ENCODE measurements at regions of chr20 and their contacts with region 1.

Region 1: GRCh38 chr20:38290832-38291581 is 12.9 kb upstream of the BPI start:
- DNase-seq: peak; percentile 82 to 87
- ATAC-seq: peak; percentile 93 to 96
- H3K4me3 ChIP-seq: peak overlapping the region; percentile 45
- H3K27ac ChIP-seq: peak overlapping the region; percentile 52 to 71
- H3K4me1 ChIP-seq: no peaks in the 10 kb centered on the region
- CTCF ChIP-seq: peak; percentile 89
- EP300 ChIP-seq: 0 out of 5 replicates have a peak, but pooled peaks of 1 of the 2 experiments have one; percentile 12
- POLR2A ChIP-seq: no peak
- RAD21 ChIP-seq: peak; percentile 54 to 62

Region 2: GRCh38 chr20:38262931-38263330 is 28.1 kb before region 1 on chr20:
- CTCF ChIA-PET with region 1: interaction called, 10 read pairs
- POLR2A ChIA-PET with region 1: no interaction called
- DNase-seq: no peak
- ATAC-seq: no peak
- H3K4me3 ChIP-seq: no peak overlapping the region
- H3K27ac ChIP-seq: no peak overlapping the region
- H3K4me1 ChIP-seq: no peaks in the 10 kb centered on the region; the same call in 2 of the 3 replicates
- CTCF ChIP-seq: no peak
- EP300 ChIP-seq: no peak
- POLR2A ChIP-seq: no peak
- RAD21 ChIP-seq: no peak

Region 3: GRCh38 chr20:38270869-38271605 is 20.0 kb before region 1 on chr20:
- CTCF ChIA-PET with region 1: interaction called, 10 read pairs
- POLR2A ChIA-PET with region 1: no interaction called
- DNase-seq: peak; percentile 30 to 32
- ATAC-seq: peak; percentile 35 to 77; a peak in 5 of 6 replicates
- H3K4me3 ChIP-seq: no peak overlapping the region
- H3K27ac ChIP-seq: peak overlapping the region; percentile 19 to 34; a peak in 3 of 6 replicates
- H3K4me1 ChIP-seq: peaks cover 12% of the 10 kb centered on the region
- CTCF ChIP-seq: no peak
- EP300 ChIP-seq: no peak
- POLR2A ChIP-seq: no peak
- RAD21 ChIP-seq: no peak

Region 4: GRCh38 chr20:38304845-38305447 is 13.9 kb after region 1 on chr20:
- CTCF ChIA-PET with region 1: interaction called, 39 read pairs
- POLR2A ChIA-PET with region 1: no interaction called
- DNase-seq: peak; percentile 43 to 50
- ATAC-seq: peak; percentile 68 to 85; a peak in 4 of 6 replicates
- H3K4me3 ChIP-seq: no peak overlapping the region
- H3K27ac ChIP-seq: no peak overlapping the region
- H3K4me1 ChIP-seq: no peaks in the 10 kb centered on the region
- CTCF ChIP-seq: peak; percentile 39
- EP300 ChIP-seq: no peak
- POLR2A ChIP-seq: no peak
- RAD21 ChIP-seq: peak in 1 of 2 experiments; percentile 44; a peak in 4 of 5 replicates

Region 5: DNA sequence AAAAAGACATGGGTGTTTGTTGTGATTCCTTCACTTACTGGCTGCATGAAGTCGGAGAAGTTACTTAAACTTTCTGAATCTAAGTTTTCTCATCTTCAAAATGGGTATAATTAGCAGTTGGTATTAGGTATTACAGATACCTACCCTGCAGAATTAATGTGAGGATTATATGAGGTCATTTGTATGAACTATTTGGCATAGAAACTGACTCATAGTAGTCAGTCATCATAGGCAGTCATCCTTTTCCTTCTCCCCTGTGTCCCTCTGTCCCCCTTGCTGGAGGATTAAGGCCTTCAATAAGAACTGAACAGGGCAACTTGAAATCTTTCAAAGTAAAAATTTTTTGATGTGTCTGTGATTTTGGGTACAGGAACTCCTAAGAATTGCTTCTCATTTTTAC is 207.9 kb after region 1 on chr20:
- CTCF ChIA-PET with region 1: no interaction called
- POLR2A ChIA-PET with region 1: no interaction called
- DNase-seq: no peak
- ATAC-seq: no peak; a peak in 1 of 6 replicates
- H3K4me3 ChIP-seq: no peak overlapping the region
- H3K27ac ChIP-seq: no peak overlapping the region
- H3K4me1 ChIP-seq: 0 out of 3 replicates have a peak, but pooled peaks cover 5% of the 10 kb centered on the region
- CTCF ChIP-seq: no peak
- EP300 ChIP-seq: no peak
- POLR2A ChIP-seq: no peak
- RAD21 ChIP-seq: no peak

Measured in A549 (cell line).